Endothelial cell of umbilical vein (primary cell): ENCODE measurements at regions of chr6 and their contacts with region 1.

Region 1: DNA sequence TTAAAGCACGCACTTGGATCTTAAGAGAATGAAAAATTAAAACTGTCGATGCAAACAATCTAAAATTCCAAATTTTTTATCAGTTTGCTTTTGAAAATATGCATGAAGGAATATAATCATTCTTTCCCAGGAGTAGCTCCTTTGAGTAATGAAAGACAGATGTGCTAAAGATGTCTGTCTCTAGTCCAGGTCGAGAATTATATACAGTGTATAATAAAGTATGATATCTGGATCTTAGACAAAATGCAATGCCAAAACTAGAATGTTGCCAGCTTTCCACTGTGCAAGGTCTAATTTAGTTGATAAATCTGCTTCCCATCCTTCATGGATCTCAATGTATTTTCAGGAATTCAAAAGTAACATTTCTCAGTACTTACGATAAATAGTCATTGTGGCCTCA is 65.1 kb upstream of the ADGRG6 start:
- DNase-seq: no peak
- H3K4me3 ChIP-seq: no peak overlapping the region
- H3K27ac ChIP-seq: no peak overlapping the region
- H3K4me1 ChIP-seq: no peaks in the 10 kb centered on the region
- H3K27me3 ChIP-seq: no peaks in the 10 kb centered on the region
- CTCF ChIP-seq: no peak
- POLR2A ChIP-seq: no peak

Region 2: DNA sequence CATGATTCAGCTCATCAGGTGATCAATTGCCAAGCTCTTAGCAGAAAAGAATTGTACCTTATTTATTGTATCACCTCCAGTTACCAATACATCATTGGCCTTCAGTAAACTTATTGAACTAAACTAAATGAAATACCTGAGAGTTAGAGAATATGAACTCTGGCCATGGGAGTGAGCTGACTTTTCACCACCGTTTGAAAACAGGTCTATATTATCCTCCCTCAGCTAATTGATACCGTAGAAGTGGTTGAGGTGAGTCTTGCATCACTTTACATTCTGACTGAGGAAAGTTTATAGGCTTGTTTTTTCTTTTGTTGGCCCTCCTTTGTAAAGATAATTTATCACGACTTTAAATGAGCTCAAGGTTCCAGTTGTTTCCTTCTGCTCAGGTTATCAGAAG is 12.6 kb after region 1 on chr6:
- CTCF ChIA-PET with region 1: interaction called, 14 read pairs
- POLR2A ChIA-PET with region 1: no interaction called
- dilution Hi-C with region 1: no loop called
- intact Hi-C with region 1: no loop called
- DNase-seq: no peak
- H3K4me3 ChIP-seq: no peak overlapping the region
- H3K27ac ChIP-seq: no peak overlapping the region
- H3K4me1 ChIP-seq: no peaks in the 10 kb centered on the region
- H3K27me3 ChIP-seq: no peaks in the 10 kb centered on the region
- CTCF ChIP-seq: no peak
- POLR2A ChIP-seq: no peak

Region 3: DNA sequence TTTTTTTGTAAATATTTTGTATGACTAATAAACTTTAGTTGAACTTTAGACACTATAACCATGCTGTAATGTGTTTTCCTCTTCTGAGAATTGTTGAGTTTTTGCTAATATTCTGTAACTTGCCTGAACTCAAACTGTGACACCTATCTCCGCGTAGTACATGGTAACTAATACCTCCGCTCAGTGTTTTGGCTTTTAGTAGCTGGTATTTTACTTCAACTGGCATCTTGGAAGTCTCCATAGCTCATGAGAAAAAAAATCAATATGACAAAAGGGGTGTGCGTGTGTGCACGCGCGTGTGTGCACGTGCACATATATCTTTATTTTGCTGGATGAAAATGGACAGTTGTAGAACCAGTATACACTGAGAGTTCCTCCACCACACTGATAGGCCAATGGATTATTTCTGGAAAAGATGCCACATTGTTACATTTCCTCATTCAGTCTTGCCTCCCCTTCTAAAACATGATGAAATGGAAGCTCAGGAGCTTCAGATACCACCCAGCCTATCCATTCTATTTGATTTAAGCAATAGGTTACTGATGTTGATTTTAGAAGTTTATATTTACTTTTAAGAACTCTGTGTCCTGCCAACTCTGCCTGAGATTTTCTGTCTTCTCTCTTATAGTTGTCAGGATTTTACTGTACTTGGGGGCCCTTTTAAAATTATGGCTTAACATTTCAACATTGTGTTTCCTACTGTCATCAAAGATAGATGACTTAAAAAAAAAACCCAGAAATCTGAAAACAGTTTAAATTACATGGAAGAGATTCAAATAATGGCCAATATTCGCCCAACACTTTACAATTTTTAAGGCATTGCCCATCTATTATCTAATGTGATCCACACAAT is 48.8 kb after region 1 on chr6:
- CTCF ChIA-PET with region 1: interaction called, 10 read pairs
- POLR2A ChIA-PET with region 1: no interaction called
- dilution Hi-C with region 1: no loop called
- intact Hi-C with region 1: no loop called
- DNase-seq: no peak
- H3K4me3 ChIP-seq: no peak overlapping the region
- H3K27ac ChIP-seq: no peak overlapping the region
- H3K4me1 ChIP-seq: no peaks in the 10 kb centered on the region
- H3K27me3 ChIP-seq: no peaks in the 10 kb centered on the region
- CTCF ChIP-seq: no peak
- POLR2A ChIP-seq: no peak

Region 4: GRCh38 chr6:142331075-142331551 is 94.4 kb after region 1 on chr6:
- CTCF ChIA-PET with region 1: interaction called, 10 read pairs
- POLR2A ChIA-PET with region 1: no interaction called
- dilution Hi-C with region 1: no loop called
- intact Hi-C with region 1: no loop called
- DNase-seq: peak; percentile 81
- H3K4me3 ChIP-seq: peak overlapping the region in 1 of 3 experiments; percentile 23
- H3K27ac ChIP-seq: peak overlapping the region; percentile 96
- H3K4me1 ChIP-seq: peaks cover 68% of the 10 kb centered on the region
- H3K27me3 ChIP-seq: no peaks in the 10 kb centered on the region
- CTCF ChIP-seq: no peak
- POLR2A ChIP-seq: no peak

Region 5: GRCh38 chr6:142387997-142388815 is 151.5 kb after region 1 on chr6:
- CTCF ChIA-PET with region 1: interaction called, 60 read pairs
- POLR2A ChIA-PET with region 1: no interaction called
- dilution Hi-C with region 1: no loop called
- intact Hi-C with region 1: loop called (anchors 1 kb)
- DNase-seq: peak; percentile 81
- H3K4me3 ChIP-seq: no peak overlapping the region
- H3K27ac ChIP-seq: peak overlapping the region; percentile 11
- H3K4me1 ChIP-seq: peaks cover 7% of the 10 kb centered on the region
- H3K27me3 ChIP-seq: no peaks in the 10 kb centered on the region
- CTCF ChIP-seq: peak; percentile 47 to 50
- POLR2A ChIP-seq: no peak

Region 6: DNA sequence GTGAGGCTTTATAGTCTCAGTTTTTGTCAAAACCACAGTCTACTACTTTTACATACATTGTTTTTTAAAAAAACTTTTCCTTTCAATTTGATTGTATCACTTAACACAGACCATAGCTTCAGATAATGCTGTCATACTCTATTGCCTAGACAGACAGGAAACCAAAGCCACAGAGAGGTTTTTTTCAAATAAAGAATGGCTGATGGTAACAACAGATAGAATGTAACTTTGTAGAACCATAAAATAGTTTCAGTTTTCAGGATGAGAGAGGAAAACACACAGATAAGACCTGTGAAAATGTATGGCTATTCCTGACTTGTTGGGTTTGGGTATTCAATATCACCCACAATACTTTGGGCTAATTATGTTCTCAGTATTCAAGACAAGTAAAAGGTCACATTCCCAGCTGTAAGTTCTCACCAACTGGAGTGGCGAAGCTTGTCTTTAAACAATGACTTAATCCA is 159.1 kb after region 1 on chr6:
- CTCF ChIA-PET with region 1: interaction called, 10 read pairs
- POLR2A ChIA-PET with region 1: no interaction called
- dilution Hi-C with region 1: no loop called
- intact Hi-C with region 1: no loop called
- DNase-seq: peak; percentile 94
- H3K4me3 ChIP-seq: no peak overlapping the region
- H3K27ac ChIP-seq: peak overlapping the region; percentile 99
- H3K4me1 ChIP-seq: peaks cover 47% of the 10 kb centered on the region
- H3K27me3 ChIP-seq: no peaks in the 10 kb centered on the region
- CTCF ChIP-seq: no peak
- POLR2A ChIP-seq: no peak